Adrenal gland (tissue), 19 donors: ENCODE measurements at regions of chr22 and their contacts with region 1.

Region 1: GRCh38 chr22:32528984-32529982 is 54.7 kb downstream of the FBXO7 start:
- DNase-seq: peak; percentile 82 to 95 (median 90)
- H3K4me3 ChIP-seq: no peak overlapping the region
- H3K27ac ChIP-seq: peak overlapping the region in 4 of 5 donors; percentile 6 to 85 (median 34)
- H3K4me1 ChIP-seq: peaks cover 0 to 18% of the 10 kb centered on the region in 2 donors
- H3K27me3 ChIP-seq: no peaks in the 10 kb centered on the region
- CTCF ChIP-seq: peak; percentile 81 to 94 (median 88)
- POLR2A ChIP-seq: no peak

Region 2: DNA sequence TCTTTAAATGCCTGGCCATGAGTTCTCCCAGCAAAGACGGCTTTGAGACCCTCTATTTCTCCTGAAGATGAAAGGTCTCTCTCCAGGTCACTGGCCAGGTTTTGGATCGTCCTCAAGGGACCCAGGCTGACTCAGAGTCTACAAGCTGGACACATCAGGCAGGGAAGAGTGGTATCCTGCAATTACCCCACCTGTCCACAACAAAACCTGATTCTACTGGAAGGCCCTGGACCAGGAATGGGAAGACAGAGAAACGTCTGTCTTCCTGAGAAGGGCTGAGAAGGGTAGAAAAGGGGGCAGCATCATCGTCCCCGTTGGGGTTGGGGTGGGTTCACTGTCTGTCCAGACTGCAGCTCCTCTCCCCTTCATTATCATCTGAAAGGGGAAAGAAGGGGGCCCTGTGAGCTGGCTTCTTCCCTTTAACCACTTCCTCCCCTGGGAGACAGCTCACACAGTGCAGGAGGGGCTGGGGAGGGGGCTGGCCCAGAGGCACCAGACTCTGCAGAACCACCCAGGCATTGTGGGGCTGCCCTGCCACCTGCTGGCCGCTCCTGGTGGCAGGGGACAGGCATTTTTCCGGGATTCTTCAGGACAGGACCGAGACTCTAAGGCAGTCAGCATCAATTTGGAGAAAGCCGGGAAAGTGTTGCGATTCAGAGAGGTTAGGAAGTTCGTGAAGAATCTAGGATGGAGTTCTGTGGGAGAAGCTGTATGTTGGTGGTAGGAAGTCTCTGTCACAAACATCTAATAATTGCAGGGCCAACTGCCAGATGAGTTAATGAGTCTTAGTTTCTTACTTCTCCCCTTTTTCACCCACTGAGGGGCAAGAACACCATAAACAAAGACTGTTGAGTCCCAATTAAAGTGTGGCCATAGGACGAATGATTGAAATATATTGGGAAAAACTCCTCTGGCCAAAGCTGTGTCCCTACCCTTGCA is 471.3 kb after region 1 on chr22:
- intact Hi-C with region 1: loop called (anchors 5 to 10 kb)
- DNase-seq: peak; percentile 43 to 79 (median 59)
- H3K4me3 ChIP-seq: no peak overlapping the region
- H3K27ac ChIP-seq: no peak overlapping the region
- H3K4me1 ChIP-seq: no peaks in the 10 kb centered on the region
- H3K27me3 ChIP-seq: no peaks in the 10 kb centered on the region
- CTCF ChIP-seq: peak; percentile 79 to 93 (median 88)
- POLR2A ChIP-seq: no peak